CD4-positive, alpha-beta memory T cell (primary cell): ENCODE measurements at regions of chr5 and their contacts with region 1.

Region 1: DNA sequence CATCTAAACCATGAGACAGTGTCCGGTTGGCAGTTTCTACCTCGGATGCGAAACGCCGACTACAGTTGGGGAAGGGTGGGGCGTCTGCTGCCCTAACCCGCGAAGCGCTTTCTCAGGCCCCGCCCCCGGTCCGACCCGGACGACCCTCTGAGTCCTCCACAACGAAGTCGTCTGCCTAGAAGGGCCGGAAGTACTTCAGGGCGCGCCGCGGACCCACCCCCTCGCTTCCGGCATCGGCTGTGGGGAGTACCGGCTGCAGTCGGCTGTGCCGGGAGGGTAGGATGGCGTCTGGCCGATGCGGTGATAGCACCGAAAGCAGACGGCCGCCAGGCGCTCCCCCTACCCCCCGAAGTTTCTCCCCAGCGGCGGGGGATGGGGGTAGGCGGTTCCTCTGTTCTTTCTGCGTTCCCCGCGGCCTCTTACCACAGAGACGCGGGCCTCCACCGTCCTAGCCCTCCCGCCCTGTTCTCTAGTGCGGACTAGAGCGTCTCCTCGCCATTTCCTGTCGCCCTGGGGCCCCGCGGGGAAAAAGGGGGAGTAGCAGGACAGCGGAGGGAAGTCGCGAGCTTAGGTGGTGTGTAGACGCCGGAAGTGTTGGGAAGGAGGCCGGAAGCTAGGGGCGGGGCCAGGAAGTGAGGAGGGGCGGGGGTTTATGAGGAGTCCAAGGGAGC is at the start of gene TRIM41:
- DNase-seq: peak; percentile 97 to 98 (median 97)
- H3K4me3 ChIP-seq: peak within 1 kb of the TSS; percentile 62 to 90
- H3K4me3 Mint-ChIP-seq: peak within 1 kb of the TSS; percentile 90 to 99 (median 97)
- H3K27ac ChIP-seq: peak within 1 kb of the TSS; percentile 97
- H3K27ac Mint-ChIP-seq: peak within 1 kb of the TSS; percentile 98 to 100 (median 99)
- H3K4me1 ChIP-seq: peaks cover 52% of the 10 kb centered on the region
- H3K4me1 Mint-ChIP-seq: peaks cover 32 to 75% (median 52%) of the 10 kb centered on the region in 4 donors
- H3K27me3 ChIP-seq: no peaks in the 10 kb centered on the region
- H3K27me3 Mint-ChIP-seq: peaks cover 0 to 18% of the 10 kb centered on the region in 2 donors
- total RNA-seq, gene TRIM41: 39.9 to 40.7 TPM

Region 2: DNA sequence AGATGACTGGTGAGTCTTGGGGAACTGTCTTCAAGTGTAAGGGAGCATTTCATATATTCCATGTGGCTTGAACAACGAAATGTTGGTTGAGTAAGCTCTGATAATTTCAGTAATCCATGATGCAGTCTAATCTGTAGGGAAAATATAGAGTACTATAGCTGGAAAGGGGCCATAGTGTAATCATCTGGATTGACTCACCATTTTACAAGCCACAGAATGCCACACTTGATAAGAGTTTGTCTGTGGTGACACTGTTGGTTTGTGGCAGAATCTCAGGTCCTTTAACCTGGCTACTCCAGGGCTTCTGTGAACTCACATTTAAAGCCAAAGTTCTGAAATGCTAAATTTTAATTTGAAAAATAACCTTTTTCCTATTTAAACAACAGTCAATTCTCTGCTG is 1506.9 kb before region 1 on chr5:
- CTCF ChIA-PET with region 1: no interaction called
- POLR2A ChIA-PET with region 1: no interaction called
- intact Hi-C with region 1: no loop called
- DNase-seq: no peak
- H3K4me3 ChIP-seq: no peak overlapping the region
- H3K4me3 Mint-ChIP-seq: no peak overlapping the region
- H3K27ac ChIP-seq: no peak overlapping the region
- H3K27ac Mint-ChIP-seq: peak overlapping the region in 2 of 7 donors; percentile 31 to 88
- H3K4me1 ChIP-seq: no peaks in the 10 kb centered on the region
- H3K4me1 Mint-ChIP-seq: peaks cover 4 to 11% (median 6%) of the 10 kb centered on the region in 4 donors
- H3K27me3 ChIP-seq: no peaks in the 10 kb centered on the region
- H3K27me3 Mint-ChIP-seq: no peaks in the 10 kb centered on the region

Region 3: DNA sequence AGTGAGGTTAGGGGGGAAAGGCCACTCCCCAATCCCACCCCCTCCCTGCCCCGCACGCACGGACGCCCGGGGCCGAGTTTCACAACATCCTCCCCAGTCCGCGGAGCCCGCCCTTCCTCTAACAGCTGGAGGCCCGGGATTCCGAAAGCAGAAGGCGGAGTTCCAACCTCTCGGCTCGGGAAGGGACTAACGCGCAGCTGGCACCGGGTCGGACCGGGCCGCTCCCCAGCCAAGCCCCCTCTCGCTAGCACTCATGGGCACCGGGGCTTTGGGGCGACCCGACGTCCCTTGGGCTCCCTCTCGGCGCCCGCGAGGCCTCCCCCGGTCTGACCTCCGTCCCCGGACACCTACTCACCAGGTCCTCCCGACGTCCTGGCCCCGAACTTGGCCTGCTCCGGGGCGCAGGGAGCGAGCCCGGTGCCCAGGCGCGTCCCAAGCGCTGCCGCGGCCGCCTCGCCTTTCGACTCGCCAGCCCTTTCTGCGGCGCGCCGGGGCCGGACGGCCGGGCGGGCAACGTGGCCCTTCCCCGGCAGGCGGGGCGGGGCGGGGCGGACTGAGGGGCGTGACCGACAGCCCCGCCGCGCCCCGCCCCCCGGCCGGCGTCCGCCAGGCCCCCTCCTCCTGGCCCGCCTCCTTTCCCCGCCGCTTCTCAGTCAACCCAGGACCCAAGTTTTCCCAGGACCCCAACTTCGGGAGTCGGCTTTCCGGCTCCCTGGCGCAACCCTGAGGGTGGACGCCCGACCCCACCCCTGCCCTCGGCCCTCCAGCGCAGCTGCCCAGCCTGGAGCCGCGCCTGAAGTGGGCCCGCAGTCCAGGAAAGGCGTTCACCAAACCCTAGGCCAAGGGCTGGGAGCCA is 420.6 kb before region 1 on chr5 and contains the start of gene MGAT1:
- CTCF ChIA-PET with region 1: no interaction called
- POLR2A ChIA-PET with region 1: interaction called, 8 read pairs
- intact Hi-C with region 1: loop called (anchors 2 kb)
- DNase-seq: peak; percentile 60 to 77 (median 66)
- H3K4me3 ChIP-seq: peak within 1 kb of the TSS; percentile 38 to 84
- H3K4me3 Mint-ChIP-seq: peak within 1 kb of the TSS; percentile 87 to 99 (median 96)
- H3K27ac ChIP-seq: peak within 1 kb of the TSS; percentile 87
- H3K27ac Mint-ChIP-seq: peak within 1 kb of the TSS; percentile 92 to 98 (median 95)
- H3K4me1 ChIP-seq: peaks cover 82% of the 10 kb centered on the region
- H3K4me1 Mint-ChIP-seq: peaks cover 66 to 93% (median 77%) of the 10 kb centered on the region in 4 donors
- H3K27me3 ChIP-seq: no peaks in the 10 kb centered on the region
- H3K27me3 Mint-ChIP-seq: no peaks in the 10 kb centered on the region
- total RNA-seq, gene MGAT1: 187 TPM

Region 4: DNA sequence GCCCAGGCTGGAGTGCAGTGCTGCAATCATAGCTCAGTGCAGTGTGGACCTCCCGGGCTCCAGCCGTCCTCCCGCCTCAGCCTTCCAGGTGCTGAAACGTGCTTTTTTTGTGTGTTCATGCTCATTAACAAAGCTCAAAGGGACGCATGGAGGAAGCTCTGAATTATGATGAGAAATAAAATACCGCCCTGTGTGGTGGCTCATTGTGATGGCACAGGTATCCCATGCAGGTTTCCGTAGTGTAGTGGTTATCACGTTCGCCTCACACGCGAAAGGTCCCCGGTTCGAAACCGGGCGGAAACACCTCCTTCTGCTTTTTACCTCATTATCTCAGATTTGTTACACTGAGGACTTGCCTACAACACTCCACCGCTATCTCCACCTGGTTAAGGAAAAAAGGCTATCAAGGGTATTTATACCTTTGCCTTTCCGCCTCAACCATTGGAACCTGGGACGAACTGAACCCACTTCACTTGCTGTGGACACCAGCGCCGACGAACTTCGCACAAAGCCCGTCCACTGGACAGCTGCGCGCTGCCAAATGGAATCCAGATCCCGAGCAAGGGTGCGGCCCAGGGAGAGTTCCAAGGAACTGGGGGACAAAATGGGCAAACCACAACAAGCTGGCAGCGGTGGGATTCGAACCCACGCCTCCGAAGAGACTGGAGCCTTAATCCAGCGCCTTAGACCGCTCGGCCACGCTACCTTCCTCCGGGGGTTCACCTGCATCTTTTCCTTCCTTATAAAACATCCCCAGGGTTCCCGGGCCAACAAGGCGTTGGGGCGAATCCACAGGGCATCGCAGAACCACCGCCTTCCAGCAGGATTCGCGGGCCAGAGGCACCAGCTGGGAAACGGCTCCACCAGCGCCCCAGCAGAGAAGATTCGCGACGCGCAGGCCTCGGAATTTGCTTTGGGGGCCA is 49.5 kb before region 1 on chr5:
- CTCF ChIA-PET with region 1: no interaction called
- POLR2A ChIA-PET with region 1: interaction called, 13 read pairs
- intact Hi-C with region 1: no loop called
- DNase-seq: peak; percentile 46 to 67 (median 57)
- H3K4me3 ChIP-seq: no peak overlapping the region
- H3K4me3 Mint-ChIP-seq: peak overlapping the region; percentile 25 to 89 (median 84)
- H3K27ac ChIP-seq: no peak overlapping the region
- H3K27ac Mint-ChIP-seq: peak overlapping the region in 6 of 7 donors; percentile 64 to 94 (median 73)
- H3K4me1 ChIP-seq: peaks cover 17% of the 10 kb centered on the region
- H3K4me1 Mint-ChIP-seq: peaks cover 7 to 34% (median 23%) of the 10 kb centered on the region in 4 donors
- H3K27me3 ChIP-seq: peaks cover 48% of the 10 kb centered on the region
- H3K27me3 Mint-ChIP-seq: peaks cover 37 to 49% of the 10 kb centered on the region in 2 donors

Region 5: DNA sequence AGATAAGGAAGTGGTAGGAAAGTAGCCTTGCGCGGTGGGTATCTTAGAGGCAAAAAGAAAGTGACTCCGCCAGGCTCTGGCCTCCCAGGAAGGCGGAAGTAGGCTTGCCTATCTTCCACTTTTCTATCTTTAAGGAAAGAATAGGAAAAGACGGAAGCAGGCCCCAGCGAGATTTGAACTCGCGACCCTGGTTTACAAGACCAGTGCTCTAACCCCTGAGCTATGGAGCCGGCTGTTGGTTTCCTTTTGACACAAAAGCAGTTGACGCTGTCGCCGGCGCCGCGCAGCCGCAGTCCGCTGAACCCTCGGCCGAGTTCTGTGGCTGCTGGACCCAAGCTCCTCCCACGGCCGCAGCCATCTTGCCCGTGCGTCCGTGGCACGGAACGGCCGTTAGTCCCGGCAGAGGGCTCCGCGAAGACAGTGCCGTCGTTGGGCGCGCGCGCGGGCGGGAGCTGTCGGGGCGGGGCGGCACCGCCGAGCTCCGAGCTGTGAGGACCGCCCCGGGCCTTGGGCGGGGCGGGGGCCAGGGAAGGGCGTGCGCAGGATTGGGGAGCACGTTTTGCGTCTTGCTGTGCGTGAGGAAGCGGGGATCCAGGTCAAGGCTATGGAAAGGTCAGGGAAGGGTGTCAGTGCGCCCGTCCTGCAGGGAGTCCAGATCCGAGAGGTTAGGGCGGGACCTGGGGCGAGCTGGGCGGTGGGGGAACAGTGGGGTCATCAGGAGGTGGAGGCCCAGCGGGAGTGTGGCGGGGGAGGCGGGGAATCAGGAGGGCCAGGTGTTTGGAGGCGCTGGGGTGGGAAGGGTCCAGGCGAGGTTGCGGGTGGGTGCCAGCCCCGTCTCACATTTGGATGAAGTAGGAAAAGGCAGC is 31.4 kb before region 1 on chr5:
- CTCF ChIA-PET with region 1: interaction called, 28 read pairs
- POLR2A ChIA-PET with region 1: interaction called, 375 read pairs
- intact Hi-C with region 1: loop called (anchors 1 kb)
- DNase-seq: peak; percentile 94 to 98 (median 96)
- H3K4me3 ChIP-seq: peak overlapping the region; percentile 87 to 97
- H3K4me3 Mint-ChIP-seq: peak overlapping the region; percentile 96 to 99 (median 98)
- H3K27ac ChIP-seq: peak overlapping the region; percentile 79
- H3K27ac Mint-ChIP-seq: peak overlapping the region; percentile 95 to 100 (median 97)
- H3K4me1 ChIP-seq: peaks cover 16% of the 10 kb centered on the region
- H3K4me1 Mint-ChIP-seq: peaks cover 16 to 64% (median 32%) of the 10 kb centered on the region in 4 donors
- H3K27me3 ChIP-seq: no peaks in the 10 kb centered on the region
- H3K27me3 Mint-ChIP-seq: peaks cover 5 to 19% of the 10 kb centered on the region in 2 donors

Region 6: DNA sequence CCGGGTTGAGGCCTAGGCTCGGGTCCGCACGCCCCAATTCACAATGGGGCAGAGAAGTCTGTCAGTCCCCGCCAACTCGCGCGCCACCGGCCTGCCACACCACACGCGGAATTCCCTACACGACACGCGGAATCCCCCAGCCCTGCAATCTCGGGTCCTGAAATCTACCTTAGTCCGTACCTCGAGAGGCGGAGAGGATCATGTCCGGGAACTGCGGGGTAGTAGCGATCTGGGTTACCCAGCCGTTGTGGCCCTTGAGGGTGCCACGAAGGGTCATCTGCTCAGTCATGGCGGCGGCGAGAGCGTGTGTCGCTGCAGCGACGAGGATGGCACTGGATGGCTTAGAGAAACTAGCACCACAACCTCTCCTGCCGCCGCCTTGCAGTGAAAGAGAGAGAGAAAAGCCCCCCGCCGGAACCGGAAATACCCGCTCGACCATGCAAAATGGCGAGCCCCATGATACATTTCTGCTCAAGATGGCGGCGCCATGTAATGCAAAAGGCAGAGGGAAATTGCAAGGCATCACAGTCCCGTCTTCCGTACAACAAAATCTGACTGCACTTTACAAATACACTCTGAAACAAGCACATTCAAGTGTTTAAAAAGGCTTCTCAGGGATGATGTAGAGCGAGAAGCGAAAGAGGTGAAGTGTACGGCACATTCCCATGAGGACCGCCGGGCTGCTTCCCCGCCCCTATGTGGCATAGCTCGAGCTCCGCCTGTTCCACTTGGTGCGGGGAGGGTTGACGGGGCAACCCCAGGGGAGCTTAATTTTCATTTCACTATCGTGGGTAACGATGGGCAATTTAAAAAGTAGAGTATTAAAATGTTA is 20.5 kb after region 1 on chr5 and contains the start of gene RACK1:
- CTCF ChIA-PET with region 1: interaction called, 4 read pairs
- POLR2A ChIA-PET with region 1: interaction called, 339 read pairs
- intact Hi-C with region 1: loop called (anchors 1 kb)
- DNase-seq: peak; percentile 90 to 95 (median 91)
- H3K4me3 ChIP-seq: peak within 1 kb of the TSS; percentile 97 to 98
- H3K4me3 Mint-ChIP-seq: peak within 1 kb of the TSS; percentile 93 to 100 (median 98)
- H3K27ac ChIP-seq: peak within 1 kb of the TSS; percentile 96
- H3K27ac Mint-ChIP-seq: peak within 1 kb of the TSS; percentile 96 to 100 (median 99)
- H3K4me1 ChIP-seq: peaks cover 61% of the 10 kb centered on the region
- H3K4me1 Mint-ChIP-seq: peaks cover 42 to 85% (median 63%) of the 10 kb centered on the region in 4 donors
- H3K27me3 ChIP-seq: no peaks in the 10 kb centered on the region
- H3K27me3 Mint-ChIP-seq: no peaks in the 10 kb centered on the region
- total RNA-seq, gene RACK1: 1,956 to 2,001 TPM